ENCODE measurements at regions of chr6 and their contacts with region 1.

Region 1: DNA sequence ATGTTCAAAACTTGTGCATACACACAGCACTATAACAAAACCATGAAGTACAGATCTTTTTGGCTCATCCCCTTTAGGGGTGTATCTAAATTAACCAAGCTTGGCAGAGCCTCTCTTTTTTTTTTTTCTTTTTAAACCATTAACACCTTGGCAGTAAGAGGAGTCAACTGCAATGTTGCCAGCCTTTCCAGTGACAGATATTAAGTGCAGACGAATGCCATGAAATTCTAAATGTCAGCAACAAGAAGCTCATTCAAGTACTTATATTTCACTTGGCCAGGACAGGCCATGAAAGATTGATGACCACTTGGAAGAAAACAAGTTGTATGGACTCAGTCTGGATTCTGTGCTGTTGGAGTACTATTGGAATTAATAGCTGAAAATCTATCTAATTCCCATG is 49.8 kb downstream of the SLC17A5 start:
- DNase-seq: no peak
- ATAC-seq: peak; percentile 42 to 89 (median 58)
- H3K4me3 ChIP-seq: no peak overlapping the region
- H3K27ac ChIP-seq: no peak overlapping the region
- H3K4me1 ChIP-seq: peaks cover 0 to 4% (median 0%) of the 10 kb centered on the region in 12 donors
- H3K27me3 ChIP-seq: no peaks in the 10 kb centered on the region
- CTCF ChIP-seq: no peak
- POLR2A ChIP-seq: no peak

Region 2: GRCh38 chr6:73566954-73567591 is 36.9 kb before region 1 on chr6:
- intact Hi-C with region 1: loop called in 2 of 10 experiments (anchors 1 kb)
- DNase-seq: peak in 4 of 5 donors; percentile 62 to 81 (median 72)
- ATAC-seq: peak; percentile 27 to 78 (median 60)
- H3K4me3 ChIP-seq: no peak overlapping the region
- H3K27ac ChIP-seq: peak overlapping the region; percentile 16 to 86 (median 64)
- H3K4me1 ChIP-seq: peaks cover 0 to 17% (median 4%) of the 10 kb centered on the region in 12 donors
- H3K27me3 ChIP-seq: no peaks in the 10 kb centered on the region
- CTCF ChIP-seq: no peak
- POLR2A ChIP-seq: peak in 1 of 2 donors; percentile 33

Region 3: DNA sequence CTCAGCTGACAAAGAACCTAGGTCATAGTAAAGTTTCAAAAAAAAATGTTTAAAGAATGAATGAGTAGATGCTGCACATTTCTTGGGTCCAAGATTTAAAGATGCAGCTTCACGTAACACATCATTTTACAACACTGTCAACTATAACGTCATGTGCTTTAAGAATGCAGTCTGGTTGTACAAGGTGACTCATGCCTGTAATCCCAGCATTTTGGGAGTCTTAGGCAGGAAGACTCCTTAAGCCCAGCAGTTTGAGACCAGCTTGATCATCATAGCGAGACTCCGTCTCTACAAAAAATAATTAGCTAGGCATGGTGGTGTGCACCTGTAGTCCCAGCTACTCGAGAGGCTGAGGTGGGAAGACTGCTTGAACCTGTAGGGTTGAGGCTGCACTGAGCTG is 27.8 kb after region 1 on chr6:
- intact Hi-C with region 1: no loop called
- DNase-seq: no peak
- ATAC-seq: no peak
- H3K4me3 ChIP-seq: no peak overlapping the region
- H3K27ac ChIP-seq: no peak overlapping the region
- H3K4me1 ChIP-seq: no peaks in the 10 kb centered on the region
- H3K27me3 ChIP-seq: no peaks in the 10 kb centered on the region
- CTCF ChIP-seq: no peak
- POLR2A ChIP-seq: no peak